Activated CD4-positive, alpha-beta T cell treated with anti-CD3 and anti-CD28 coated beads for 36 hours (primary cell): ENCODE measurements at regions of chrX and their contacts with region 1.

Region 1: DNA sequence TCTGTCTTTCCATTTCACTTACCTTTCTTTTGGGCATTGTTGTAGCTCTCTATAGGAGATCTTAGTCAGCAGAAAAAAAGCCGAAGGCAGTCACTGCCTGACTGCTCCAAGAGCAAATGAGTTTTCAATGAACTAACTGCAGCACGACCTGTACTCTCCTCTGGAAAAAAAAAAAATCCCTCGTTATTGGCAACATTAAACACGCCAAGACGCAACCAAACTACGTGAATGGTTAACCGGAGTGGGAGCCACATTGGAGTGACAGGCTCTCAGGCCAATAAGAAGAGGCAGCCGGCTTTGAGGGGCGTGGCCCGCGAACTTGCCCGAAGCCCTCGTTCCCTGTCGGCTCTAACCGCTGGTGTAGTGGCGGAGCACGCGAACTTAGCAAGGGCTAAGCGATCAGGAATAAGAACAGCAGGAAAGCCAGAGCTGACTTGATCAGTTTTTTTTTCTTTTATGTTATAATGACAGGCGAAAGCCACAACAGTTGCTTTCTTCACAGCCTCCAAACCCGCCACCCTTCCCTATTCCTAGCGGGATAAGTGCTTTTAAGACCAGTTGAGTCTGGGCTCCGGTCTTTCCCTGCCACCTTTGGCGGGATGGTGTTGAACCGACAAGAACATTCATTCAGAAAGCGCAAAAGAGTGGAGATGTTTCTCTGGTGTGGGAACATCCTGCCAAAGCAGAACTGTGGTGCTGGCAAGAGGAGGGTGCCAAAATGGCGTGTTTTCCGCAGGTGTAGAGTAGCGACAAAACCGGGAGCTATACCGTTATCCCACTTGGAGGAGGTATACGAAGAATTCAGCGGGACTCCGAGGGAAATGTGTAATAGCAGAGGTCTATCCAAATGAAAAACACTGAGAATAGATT is 80.0 kb downstream of the HMGN5 start:
- DNase-seq: peak; percentile 89
- ATAC-seq: peak; percentile 98
- H3K4me3 Mint-ChIP-seq: peak overlapping the region; percentile 93
- H3K27ac Mint-ChIP-seq: peak overlapping the region; percentile 80
- H3K4me1 Mint-ChIP-seq: peaks cover 4% of the 10 kb centered on the region
- H3K27me3 Mint-ChIP-seq: peaks cover 4% of the 10 kb centered on the region

Region 2: DNA sequence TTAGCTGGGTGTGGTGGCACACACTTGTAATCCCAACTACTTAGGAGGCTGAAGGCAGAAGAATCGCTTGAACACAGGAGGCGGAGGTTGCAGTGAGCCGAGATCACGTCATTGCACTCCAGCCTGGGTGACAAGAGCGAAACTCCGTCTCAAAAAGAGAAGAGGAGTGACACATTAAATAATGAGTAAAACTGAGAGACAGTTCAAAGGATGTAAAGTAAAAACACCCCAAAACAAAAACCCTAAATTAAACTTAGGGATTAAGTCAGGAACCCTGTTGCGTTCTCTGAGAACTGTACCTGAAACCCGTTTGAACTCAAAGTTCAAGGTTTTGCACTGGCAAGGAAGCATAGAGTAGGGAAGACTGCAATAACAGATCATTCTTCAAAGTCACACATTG is 453.8 kb before region 1 on chrX:
- CTCF ChIA-PET with region 1: interaction called, 3 read pairs
- POLR2A ChIA-PET with region 1: no interaction called
- intact Hi-C with region 1: loop called in 1 of 2 experiments (anchors 5 kb)
- DNase-seq: peak; percentile 34
- ATAC-seq: peak; percentile 77
- H3K4me3 Mint-ChIP-seq: no peak overlapping the region
- H3K27ac Mint-ChIP-seq: no peak overlapping the region
- H3K4me1 Mint-ChIP-seq: peaks cover 6% of the 10 kb centered on the region
- H3K27me3 Mint-ChIP-seq: no peaks in the 10 kb centered on the region

Region 3: DNA sequence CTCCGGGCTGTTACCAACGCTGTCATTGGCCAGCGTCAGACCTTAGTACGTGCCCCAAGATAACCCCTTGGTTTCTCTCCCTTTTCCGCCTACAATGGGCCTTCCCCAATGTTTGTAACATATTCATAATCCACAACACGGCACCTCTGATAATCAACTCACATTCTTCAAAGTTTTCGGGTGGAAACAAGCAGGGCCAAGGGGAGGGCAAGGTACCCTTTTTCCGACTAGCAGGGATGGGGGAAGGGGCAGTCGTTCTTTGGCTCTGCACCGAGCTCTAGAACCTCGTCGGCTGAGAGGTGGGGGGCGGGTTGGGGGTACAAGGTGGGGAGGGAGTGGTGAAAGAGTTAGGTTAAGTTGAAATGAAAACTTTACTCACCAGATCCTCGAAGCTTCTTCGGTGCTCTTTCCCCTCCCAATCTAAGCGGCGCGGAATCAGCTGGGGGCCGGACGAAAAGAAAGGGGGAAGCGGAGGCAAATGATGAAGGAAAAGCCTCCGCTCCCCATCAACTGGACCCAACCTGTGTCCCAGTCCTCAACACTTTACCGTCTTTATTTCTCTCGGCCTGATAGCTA is 313.5 kb before region 1 on chrX:
- CTCF ChIA-PET with region 1: no interaction called
- POLR2A ChIA-PET with region 1: interaction called, 12 read pairs
- intact Hi-C with region 1: loop called (anchors 1 kb)
- DNase-seq: peak; percentile 81
- ATAC-seq: peak; percentile 66
- H3K4me3 Mint-ChIP-seq: peak overlapping the region; percentile 88
- H3K27ac Mint-ChIP-seq: peak overlapping the region; percentile 93
- H3K4me1 Mint-ChIP-seq: peaks cover 25% of the 10 kb centered on the region
- H3K27me3 Mint-ChIP-seq: no peaks in the 10 kb centered on the region

Region 4: DNA sequence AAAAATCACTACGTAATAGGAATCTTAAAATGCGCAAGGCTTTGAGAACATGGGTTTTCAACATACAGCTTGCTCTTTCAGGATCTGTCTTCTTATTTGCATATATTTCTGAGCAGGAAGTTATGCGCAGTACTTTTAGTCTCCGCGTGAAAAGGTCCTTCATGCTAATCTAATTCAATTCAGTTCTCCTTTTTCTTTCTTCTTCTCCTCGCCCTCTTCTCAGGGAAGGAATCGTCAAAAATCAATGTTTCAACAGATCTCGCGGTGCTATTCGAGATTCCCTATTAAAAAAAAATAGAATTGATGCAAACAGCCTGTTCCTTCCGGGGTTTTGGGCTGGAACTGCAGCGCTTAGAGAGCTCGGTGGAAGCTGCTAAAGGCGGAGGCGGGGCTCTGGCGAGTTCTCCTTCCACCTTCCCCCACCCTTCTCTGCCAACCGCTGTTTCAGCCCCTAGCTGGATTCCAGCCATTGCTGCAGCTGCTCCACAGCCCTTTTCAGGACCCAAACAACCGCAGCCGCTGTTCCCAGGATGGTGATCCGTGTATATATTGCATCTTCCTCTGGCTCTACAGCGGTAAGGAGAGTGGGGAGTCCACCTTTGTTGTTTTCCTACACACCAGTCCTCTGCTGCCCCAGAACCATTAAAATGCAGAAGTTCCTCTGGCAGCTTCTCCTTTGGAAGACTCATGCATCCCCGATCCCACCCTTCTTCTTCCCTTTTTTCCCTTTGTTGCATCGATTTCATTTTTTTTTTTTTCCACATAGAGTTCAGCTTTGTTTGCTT is 80.1 kb after region 1 on chrX and contains the starts of genes HMGN5 and SH3BGRL:
- CTCF ChIA-PET with region 1: no interaction called
- POLR2A ChIA-PET with region 1: no interaction called
- intact Hi-C with region 1: loop called (anchors 1 to 2 kb)
- DNase-seq: peak; percentile 80
- ATAC-seq: peak; percentile 97
- H3K4me3 Mint-ChIP-seq: peak within 1 kb of the TSS; percentile 88
- H3K27ac Mint-ChIP-seq: peak within 1 kb of the TSS; percentile 97
- H3K4me1 Mint-ChIP-seq: peaks cover 32% of the 10 kb centered on the region
- H3K27me3 Mint-ChIP-seq: no peaks in the 10 kb centered on the region
- total RNA-seq, gene HMGN5: 5.5 to 6.6 TPM
- total RNA-seq, gene SH3BGRL: 34.5 to 46.9 TPM

Region 5: DNA sequence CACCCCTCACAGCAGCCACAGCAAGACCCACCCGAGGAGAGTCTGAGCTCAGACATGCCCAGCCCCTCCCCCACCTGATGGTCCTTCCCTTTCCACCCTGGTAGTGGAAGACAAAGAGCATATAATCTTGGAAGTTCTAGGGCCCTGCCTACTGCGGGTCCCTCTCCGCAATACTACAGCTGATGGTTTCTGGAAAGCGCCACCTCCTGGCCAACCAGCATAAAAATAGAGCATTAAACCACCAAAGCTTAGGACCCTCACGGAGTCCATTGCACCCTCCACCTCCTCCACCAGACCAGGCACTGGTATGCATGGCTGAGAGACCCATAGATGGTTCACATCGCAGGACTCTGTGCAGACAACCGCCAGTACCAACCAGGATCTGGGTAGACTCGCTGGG is 158.4 kb after region 1 on chrX:
- CTCF ChIA-PET with region 1: no interaction called
- POLR2A ChIA-PET with region 1: no interaction called
- intact Hi-C with region 1: no loop called
- DNase-seq: peak; percentile 2
- ATAC-seq: no peak
- H3K4me3 Mint-ChIP-seq: no peak overlapping the region
- H3K27ac Mint-ChIP-seq: no peak overlapping the region
- H3K4me1 Mint-ChIP-seq: no peaks in the 10 kb centered on the region
- H3K27me3 Mint-ChIP-seq: no peaks in the 10 kb centered on the region

Region 6: DNA sequence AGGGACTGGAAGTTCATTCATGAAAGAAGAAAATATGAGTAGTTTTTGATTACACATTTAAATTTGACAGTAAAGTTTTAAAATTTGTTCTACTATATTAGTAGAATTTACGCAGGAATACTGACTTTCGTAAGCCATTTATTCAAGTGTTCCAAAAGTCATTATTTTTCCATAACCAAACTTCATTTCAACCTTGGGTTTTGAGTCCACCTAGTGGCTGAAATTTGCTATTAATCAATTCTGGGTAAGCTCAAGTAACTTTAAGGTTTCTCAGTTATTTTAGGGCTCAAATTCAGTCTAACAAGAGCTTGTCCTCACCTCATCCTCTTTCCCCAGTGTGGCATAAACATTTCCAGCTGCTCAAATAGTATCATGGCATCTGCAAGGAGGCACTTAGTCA is 255.6 kb after region 1 on chrX:
- CTCF ChIA-PET with region 1: no interaction called
- POLR2A ChIA-PET with region 1: no interaction called
- intact Hi-C with region 1: loop called in 1 of 2 experiments (anchors 2 kb)
- DNase-seq: no peak
- ATAC-seq: no peak
- H3K4me3 Mint-ChIP-seq: no peak overlapping the region
- H3K27ac Mint-ChIP-seq: no peak overlapping the region
- H3K4me1 Mint-ChIP-seq: no peaks in the 10 kb centered on the region
- H3K27me3 Mint-ChIP-seq: peaks cover 4% of the 10 kb centered on the region